Adrenal gland (tissue), 19 donors: ENCODE measurements at regions of chr17 and their contacts with region 1.

Region 1: GRCh38 chr17:40019140-40019991 is 4.1 kb downstream of the CSF3 start:
- DNase-seq: peak in 2 of 7 donors; percentile 24 to 28
- H3K4me3 ChIP-seq: no peak overlapping the region
- H3K27ac ChIP-seq: peak overlapping the region in 3 of 5 donors; percentile 40 to 88 (median 84)
- H3K4me1 ChIP-seq: peaks cover 37 to 46% of the 10 kb centered on the region in 2 donors
- H3K27me3 ChIP-seq: no peaks in the 10 kb centered on the region
- CTCF ChIP-seq: no peak
- POLR2A ChIP-seq: no peak

Region 2: GRCh38 chr17:40062329-40063186 is 43.2 kb after region 1 on chr17 and contains the start of gene THRA:
- intact Hi-C with region 1: no loop called
- DNase-seq: peak; percentile 55 to 78 (median 73)
- H3K4me3 ChIP-seq: peak within 1 kb of the TSS; percentile 73 to 100 (median 91)
- H3K27ac ChIP-seq: peak within 1 kb of the TSS; percentile 72 to 96 (median 93)
- H3K4me1 ChIP-seq: peaks cover 23 to 40% of the 10 kb centered on the region in 2 donors
- H3K27me3 ChIP-seq: no peaks in the 10 kb centered on the region
- CTCF ChIP-seq: peak in 2 of 6 experiments; percentile 9 to 35
- POLR2A ChIP-seq: no peak
- total RNA-seq, gene THRA: 39.2 to 110 (median 73.8) TPM

Region 3: DNA sequence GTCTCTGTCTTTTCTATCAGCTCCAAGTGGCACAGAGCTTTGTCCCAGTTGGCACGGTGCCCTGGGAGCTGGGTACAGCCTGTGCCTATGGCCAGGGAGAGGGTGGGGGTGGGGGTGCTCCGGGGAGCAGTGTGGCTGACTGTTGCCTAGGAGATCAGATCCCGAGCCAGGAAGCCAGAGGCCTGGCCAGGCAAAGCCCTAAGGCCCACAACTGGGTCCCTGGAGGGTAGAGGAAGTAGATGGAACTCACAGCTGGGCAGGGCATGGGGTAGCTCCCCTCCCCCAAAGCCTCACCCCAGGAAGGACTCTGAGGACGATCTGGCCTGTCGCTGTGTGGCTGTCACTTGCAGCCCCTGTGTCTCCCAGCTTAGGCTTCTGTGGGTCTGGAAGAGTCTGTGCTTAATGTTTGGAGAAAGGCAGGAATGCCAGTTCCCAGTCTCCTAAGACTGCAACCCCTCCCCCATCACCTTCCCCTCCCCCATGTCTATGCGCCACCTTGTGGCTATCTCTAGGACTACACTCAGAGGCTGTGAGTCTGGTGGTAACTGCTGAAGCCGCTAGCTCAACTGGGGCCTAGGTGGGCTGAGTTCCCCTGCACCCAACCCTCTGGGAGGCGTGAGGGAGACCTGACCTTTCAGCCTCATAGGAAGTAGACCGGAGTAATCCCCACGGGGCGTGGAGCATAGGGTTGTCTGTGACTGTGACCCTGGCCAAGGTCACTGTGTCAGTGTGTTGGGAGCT is 56.0 kb after region 1 on chr17:
- intact Hi-C with region 1: loop called in 1 of 2 experiments (anchors 10 kb)
- DNase-seq: peak; percentile 80 to 95 (median 85)
- H3K4me3 ChIP-seq: no peak overlapping the region
- H3K27ac ChIP-seq: peak overlapping the region; percentile 51 to 95 (median 90)
- H3K4me1 ChIP-seq: peaks cover 64 to 71% of the 10 kb centered on the region in 2 donors
- H3K27me3 ChIP-seq: no peaks in the 10 kb centered on the region
- CTCF ChIP-seq: peak; percentile 82 to 99 (median 90)
- POLR2A ChIP-seq: peak in 1 of 2 donors; percentile 7